Heart right ventricle (tissue), 16 donors: ENCODE measurements at regions of chr9 and their contacts with region 1.

Region 1: DNA sequence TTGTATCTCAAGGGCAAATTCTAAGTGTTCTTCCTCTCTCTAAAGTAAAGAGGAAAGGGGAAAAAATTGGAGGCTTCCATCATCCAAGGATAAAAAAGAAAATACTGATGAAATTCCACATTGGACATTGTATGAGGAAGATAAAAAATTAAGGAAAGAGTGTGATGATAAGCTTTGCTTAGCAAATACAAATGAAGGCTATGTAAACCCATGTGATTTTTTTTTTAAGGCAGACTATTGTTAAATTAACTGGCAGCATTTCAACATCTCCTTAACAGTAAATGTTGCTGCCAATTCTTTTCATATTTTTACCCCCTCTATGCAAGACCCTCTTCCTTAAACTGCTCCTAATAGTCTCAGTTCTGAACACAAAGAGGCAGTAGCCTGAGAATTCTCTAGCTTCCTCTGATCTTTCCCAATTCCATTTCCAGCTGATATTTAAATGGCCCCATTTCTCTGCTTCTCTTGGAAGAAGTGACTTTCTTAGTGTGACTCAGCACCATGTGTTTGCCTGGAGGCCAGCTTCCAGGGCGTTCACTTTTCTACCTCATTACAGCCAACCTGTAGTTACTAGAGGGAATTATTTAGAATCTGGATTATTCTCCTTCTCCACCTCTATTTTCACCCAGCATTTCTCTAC is 159.7 kb downstream of the TLE1 start:
- DNase-seq: peak in 1 of 2 donors; percentile 12
- ATAC-seq: peak in 6 of 8 donors; percentile 69 to 82 (median 78)
- H3K4me3 ChIP-seq: no peak overlapping the region
- H3K27ac ChIP-seq: peak overlapping the region in 2 of 10 donors; percentile 6 to 46
- H3K4me1 ChIP-seq: peaks cover 0 to 22% (median 0%) of the 10 kb centered on the region in 9 donors
- H3K27me3 ChIP-seq: no peaks in the 10 kb centered on the region
- CTCF ChIP-seq: no peak

Region 2: GRCh38 chr9:79719021-79719420 is 1810.7 kb before region 1 on chr9:
- intact Hi-C with region 1: no loop called
- DNase-seq: no peak
- ATAC-seq: no peak
- H3K4me3 ChIP-seq: no peak overlapping the region
- H3K27ac ChIP-seq: no peak overlapping the region
- H3K4me1 ChIP-seq: no peaks in the 10 kb centered on the region
- H3K27me3 ChIP-seq: no peaks in the 10 kb centered on the region
- CTCF ChIP-seq: no peak

Region 3: GRCh38 chr9:81848472-81848871 is 318.8 kb after region 1 on chr9:
- intact Hi-C with region 1: loop called in 4 of 10 experiments (anchors 5 to 10 kb)
- DNase-seq: no peak
- ATAC-seq: peak in 1 of 8 donors; percentile 28
- H3K4me3 ChIP-seq: no peak overlapping the region
- H3K27ac ChIP-seq: no peak overlapping the region
- H3K4me1 ChIP-seq: peaks cover 0 to 33% (median 15%) of the 10 kb centered on the region in 9 donors
- H3K27me3 ChIP-seq: peaks cover 0 to 7% (median 0%) of the 10 kb centered on the region in 7 donors
- CTCF ChIP-seq: peak in 7 of 9 donors; percentile 31 to 67 (median 53)

Region 4: GRCh38 chr9:81855538-81855937 is 325.9 kb after region 1 on chr9:
- intact Hi-C with region 1: loop called in 1 of 10 experiments (anchors 10 kb)
- DNase-seq: no peak
- ATAC-seq: no peak
- H3K4me3 ChIP-seq: no peak overlapping the region
- H3K27ac ChIP-seq: no peak overlapping the region
- H3K4me1 ChIP-seq: peaks cover 0 to 20% (median 12%) of the 10 kb centered on the region in 9 donors
- H3K27me3 ChIP-seq: peaks cover 0 to 6% (median 0%) of the 10 kb centered on the region in 7 donors
- CTCF ChIP-seq: no peak

Region 5: DNA sequence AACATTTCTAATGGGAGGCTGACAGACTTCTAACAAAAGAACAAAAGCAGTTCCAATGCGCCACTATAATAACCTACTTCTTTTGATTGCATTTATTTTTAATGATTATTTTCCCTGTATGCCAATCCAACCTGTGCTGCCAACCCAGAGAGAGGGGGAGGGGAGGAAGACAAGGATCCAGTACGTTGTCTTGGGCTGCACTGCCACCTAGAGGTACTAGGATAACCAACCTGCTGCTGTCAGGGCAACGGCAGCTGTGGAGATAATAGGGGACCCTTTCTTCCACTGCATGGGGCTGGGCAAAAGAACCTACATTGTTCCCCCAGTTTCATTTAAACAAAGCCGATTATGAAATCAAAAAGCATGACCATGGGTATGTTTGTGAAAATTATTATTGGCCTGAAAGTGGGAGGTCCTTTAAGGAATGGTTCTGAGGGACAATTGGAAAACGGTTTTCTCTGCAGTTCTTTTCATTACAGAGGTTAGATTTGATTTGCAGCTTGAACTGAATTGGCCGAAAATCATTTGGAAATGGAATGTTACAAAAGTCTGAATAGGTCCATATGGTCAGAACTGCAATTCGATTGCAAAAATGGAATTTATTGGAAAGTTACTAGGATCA is 1431.9 kb after region 1 on chr9:
- intact Hi-C with region 1: loop called in 1 of 10 experiments (anchors 10 kb)
- DNase-seq: peak; percentile 24 to 76
- ATAC-seq: peak; percentile 55 to 92 (median 83)
- H3K4me3 ChIP-seq: no peak overlapping the region
- H3K27ac ChIP-seq: no peak overlapping the region
- H3K4me1 ChIP-seq: no peaks in the 10 kb centered on the region
- H3K27me3 ChIP-seq: peaks cover 0 to 8% (median 0%) of the 10 kb centered on the region in 7 donors
- CTCF ChIP-seq: peak; percentile 42 to 88 (median 77)